Kidney (tissue), 22 donors: ENCODE measurements at regions of chr12 and their contacts with region 1.

Region 1: DNA sequence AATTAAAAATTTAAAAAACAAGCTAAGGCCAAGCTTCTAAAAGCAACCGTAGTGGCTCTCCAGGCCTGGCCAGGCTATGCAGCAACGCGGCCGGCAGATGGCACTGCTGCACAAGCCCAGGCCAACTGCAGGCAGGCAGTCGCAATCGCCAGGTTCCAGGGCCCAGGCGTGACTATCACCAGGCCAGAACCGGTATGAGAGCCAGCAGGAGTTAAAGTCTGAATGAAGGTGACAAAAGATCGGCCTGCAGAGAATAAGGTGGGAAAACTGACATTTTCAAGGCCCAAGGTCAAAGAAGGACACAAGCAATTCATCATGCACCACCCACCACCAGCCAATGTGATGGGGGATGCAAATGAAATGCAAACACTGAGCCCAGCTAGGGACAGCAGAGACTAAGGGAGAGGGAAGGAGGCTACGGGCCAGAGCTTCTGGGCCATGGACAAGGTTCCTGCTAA is 43.6 kb upstream of the ANO2 start:
- DNase-seq: peak; percentile 86 to 90 (median 89)
- H3K4me3 ChIP-seq: no peak overlapping the region
- H3K27ac ChIP-seq: no peak overlapping the region
- H3K4me1 ChIP-seq: no peaks in the 10 kb centered on the region
- H3K27me3 ChIP-seq: no peaks in the 10 kb centered on the region
- CTCF ChIP-seq: peak; percentile 98

Region 2: GRCh38 chr12:6039894-6040568 is 51.3 kb after region 1 on chr12:
- intact Hi-C with region 1: loop called (anchors 10 kb)
- DNase-seq: peak; percentile 68 to 89 (median 74)
- H3K4me3 ChIP-seq: no peak overlapping the region
- H3K27ac ChIP-seq: no peak overlapping the region
- H3K4me1 ChIP-seq: no peaks in the 10 kb centered on the region
- H3K27me3 ChIP-seq: no peaks in the 10 kb centered on the region
- CTCF ChIP-seq: peak; percentile 97

Region 3: DNA sequence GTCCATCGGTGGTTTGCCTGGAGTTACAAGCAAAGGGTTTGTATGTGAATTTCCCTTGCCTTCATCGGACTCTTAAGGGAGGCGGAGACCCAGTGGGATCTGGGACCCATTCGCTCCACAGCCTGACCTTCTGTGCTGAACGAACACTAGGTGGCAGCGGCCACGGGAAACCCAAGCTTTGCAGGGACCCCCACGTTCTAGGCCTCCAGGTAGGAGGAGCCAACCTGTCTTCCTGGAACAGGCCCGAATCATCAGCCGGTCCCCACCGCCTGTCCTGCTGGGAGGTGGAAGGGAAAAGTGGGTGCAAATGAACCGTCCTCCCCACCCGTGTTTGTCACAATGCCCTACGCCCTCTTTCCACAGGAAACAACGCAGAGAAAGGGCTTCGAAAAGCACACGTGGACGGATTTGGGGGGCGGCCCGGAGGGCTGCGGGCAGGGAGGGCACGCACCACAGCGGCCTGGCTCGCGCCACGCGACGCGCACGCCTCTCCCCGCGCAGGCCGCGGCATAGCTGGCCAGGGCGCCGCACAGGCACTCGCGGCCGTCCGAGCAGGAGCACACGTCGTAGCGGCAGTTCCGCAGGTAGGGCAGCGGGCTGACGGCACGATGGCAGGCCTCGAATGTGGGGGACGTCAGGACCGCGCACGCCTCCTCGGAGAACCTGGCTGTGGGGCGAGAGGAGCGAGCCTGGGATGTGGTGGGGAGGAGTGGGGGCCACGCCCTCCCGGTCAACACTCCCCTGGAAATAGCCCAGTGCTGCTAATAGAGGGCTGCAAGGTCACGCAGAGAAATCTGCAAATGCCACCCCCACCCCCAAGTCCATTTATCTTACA is 67.9 kb after region 1 on chr12:
- intact Hi-C with region 1: no loop called
- DNase-seq: peak in 4 of 5 donors; percentile 81 to 83 (median 82)
- H3K4me3 ChIP-seq: peak overlapping the region in 1 of 3 donors; percentile 32
- H3K27ac ChIP-seq: peak overlapping the region; percentile 6 to 63
- H3K4me1 ChIP-seq: peaks cover 2 to 19% (median 13%) of the 10 kb centered on the region in 3 donors
- H3K27me3 ChIP-seq: no peaks in the 10 kb centered on the region
- CTCF ChIP-seq: peak; percentile 23

Region 4: DNA sequence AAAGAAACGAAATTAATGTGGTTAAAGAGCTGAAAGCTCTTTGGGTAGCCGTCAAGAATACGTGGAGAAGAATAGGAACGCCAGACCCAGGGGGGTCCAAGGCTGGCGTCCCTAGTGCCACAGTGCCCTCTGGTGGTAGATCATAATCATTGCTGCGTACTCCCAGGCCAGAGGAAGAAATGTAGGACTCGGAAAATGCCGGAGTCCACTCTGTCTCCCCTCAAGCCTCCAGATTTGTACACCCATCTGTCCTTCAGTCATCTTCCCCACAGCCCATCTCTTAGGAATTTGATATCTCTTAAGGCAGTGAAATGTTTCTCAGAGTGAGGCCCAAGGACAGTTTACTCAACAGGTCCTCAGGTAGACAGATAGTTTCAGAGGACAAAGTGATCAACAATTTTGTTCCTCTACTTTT is 296.4 kb after region 1 on chr12:
- intact Hi-C with region 1: loop called (anchors 10 kb)
- DNase-seq: peak in 4 of 5 donors; percentile 78 to 89 (median 82)
- H3K4me3 ChIP-seq: no peak overlapping the region
- H3K27ac ChIP-seq: no peak overlapping the region
- H3K4me1 ChIP-seq: peaks cover 0 to 3% (median 0%) of the 10 kb centered on the region in 3 donors
- H3K27me3 ChIP-seq: no peaks in the 10 kb centered on the region
- CTCF ChIP-seq: peak; percentile 95

Region 5: DNA sequence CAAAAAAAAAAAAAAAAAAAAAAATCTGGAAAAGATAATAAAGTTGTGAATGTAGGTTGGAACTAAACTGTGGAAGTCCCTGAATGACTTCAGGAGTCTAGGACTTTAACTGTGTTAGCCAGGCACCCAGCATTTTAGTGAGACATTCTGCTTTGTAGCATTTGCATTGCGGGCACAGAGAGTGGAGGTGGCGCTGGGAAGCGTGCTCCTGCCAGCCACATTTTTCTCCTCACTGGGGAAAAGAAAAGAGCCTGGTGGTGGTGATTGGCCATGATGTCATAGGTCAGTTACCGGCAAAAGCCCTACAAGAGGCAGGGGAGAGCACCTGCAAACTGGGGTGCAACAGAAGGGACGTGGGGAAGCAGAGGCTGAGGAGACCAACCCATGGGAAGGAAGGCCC is 536.0 kb after region 1 on chr12:
- intact Hi-C with region 1: no loop called
- DNase-seq: no peak
- H3K4me3 ChIP-seq: no peak overlapping the region
- H3K27ac ChIP-seq: no peak overlapping the region
- H3K4me1 ChIP-seq: no peaks in the 10 kb centered on the region
- H3K27me3 ChIP-seq: no peaks in the 10 kb centered on the region
- CTCF ChIP-seq: no peak